Posterior vena cava (tissue), 2 donors: ENCODE measurements at regions of chr16 and their contacts with region 1.

Region 1: DNA sequence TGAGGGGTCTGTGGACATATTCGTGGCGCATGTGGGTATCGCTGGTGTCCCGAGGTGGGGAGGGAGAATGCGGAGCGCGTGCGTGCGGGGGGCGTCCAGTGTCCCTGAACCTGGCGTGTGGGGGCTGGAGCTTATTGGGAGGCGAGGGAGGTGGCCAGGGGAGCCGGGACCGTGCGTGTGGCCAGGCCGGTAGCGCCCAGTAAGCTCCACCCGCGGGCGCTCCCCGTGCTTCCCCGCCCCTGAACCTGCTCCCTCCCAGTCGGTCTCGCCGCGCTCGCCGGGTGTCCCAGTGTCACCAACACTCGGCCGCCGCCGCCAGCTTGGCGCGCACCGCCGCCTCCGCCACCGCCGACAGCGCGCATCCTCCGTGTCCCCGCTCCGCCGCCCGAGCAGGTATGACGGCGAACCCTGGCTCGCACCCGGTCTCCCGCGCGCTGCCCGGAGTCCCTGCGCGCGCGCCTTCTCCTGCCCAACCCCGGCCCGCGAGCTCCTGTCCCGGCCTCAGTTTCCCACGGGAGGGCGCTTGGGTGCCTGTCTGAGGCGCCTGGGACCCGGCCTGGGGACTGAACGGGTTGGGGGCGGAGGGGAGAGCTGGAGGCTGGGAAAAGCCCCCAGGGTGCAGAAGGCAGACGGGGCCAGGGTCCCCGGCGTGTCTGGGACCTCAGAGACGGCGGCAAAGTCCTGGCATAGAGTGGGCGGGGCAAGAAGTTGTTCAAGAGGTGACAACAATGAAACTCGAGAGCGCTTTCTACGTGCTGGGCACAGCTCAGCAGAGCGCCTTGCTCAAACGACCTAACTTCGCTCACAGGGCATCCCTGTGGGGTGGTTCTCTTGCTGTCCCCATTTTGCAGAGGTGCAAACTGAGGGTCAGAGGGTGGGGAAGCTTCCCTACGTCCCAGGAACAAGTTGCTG is at the start of gene SCNN1B:
- DNase-seq: peak; percentile 74
- total RNA-seq, gene SCNN1B: 2.7 to 4.5 TPM

Region 2: DNA sequence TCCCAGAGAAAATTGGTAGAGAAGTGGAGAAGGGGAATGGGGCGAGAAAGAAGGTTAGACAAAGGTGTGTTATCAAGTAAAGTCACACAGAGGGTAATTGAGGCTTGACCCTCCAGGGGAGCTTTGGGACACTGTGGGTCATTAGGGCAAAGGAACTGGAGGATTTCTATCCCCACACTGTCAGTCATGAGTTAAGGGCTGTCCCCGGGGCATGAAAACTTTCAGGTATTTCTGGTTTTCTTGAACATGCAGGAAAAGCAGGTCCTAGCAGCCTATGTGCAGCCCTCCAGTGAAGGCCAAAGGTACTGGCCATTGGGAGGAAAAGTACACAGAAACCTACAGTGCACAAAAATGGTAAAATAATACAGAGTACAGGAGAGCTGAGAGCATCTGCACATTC is 44.7 kb before region 1 on chr16:
- intact Hi-C with region 1: no loop called
- DNase-seq: no peak

Region 3: DNA sequence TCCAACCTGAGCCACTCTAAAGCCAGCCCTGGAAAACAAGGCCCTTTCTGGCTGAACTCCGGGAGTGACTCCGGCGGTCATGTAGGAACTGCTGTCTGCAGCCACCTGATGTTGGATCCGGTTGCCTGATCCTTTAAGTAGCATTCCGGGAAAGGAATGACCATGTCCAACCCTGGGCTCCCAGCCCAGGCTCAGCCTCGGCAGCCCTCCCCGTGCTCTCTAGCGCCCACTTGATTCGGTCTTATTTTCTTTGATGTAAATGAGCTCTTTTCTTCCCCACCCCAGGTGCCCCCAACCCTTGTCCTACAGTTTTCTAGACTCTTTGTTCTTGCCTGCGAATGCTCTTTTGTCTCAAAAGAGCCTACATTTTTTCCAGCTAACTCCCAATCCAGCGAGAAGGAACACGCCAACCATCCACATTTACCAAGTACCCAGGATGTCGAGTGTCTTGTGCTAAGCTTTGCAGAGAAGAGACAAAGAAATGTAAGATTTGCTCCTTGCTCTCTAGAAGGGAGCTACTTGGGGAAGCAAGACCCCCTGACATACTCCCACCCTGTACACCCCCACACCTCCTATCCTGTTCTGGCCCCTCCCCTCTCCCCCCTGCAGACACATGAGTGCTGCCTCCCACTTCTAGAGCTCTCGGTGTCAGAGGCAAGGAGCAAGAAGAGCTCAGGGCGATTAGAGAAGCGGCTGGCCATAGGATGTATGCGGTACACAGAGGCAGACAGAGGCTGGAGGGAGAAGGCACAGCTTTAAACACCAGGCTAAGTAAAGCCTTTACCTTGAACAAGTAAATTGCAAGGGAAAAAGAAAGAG is 96.9 kb after region 1 on chr16:
- intact Hi-C with region 1: loop called in 1 of 2 experiments (anchors 10 kb)
- DNase-seq: peak; percentile 78